Endothelial cell of umbilical vein (primary cell): ENCODE measurements at regions of chr21 and their contacts with region 1.

Region 1: DNA sequence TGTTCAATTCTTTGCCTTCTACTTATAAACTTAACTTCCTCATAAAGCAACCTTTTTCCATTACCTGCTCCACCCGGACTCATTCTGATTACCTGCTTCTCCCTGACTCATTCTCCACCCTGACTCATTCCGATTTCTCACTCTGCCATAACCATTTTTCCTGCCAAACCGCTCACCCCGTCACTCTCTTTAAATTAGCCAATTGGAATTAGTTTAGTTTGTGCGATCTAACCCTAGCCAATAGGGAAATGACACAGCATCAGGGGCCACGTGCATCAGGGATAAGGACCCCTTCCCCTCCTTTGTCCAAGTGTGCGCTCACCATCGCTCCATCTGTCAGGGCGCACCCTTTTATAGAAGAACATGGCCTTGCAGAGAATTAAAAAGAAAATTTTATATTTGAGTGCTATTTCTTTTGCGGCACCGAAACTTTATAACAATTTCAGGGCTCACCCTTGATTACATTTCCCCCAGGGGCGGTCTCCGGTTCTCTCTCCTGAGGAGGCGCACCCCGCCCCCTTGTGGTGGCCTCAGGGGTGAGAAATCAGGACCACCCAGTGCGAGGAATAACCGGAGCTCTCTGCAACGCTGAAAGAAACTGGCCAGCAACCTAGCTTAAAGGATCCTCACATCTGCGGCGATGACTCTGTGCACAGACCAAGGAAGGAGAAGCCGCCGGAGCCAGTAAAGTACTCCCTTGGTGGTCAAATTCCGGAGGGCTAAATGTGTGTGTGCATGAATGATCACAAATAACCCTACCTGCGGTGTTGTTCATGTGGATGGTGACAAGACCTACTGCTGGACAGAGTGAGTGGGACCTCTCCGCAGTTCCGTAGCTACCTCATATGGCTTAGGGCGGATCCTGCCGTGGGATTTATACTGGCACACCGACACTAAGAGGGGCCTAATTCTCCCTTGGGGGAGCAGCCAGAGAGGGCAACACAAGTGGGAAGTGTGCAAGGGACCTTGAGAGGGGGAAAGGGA is 30.3 kb upstream of the CBR3 start:
- DNase-seq: peak; percentile 36
- H3K4me3 ChIP-seq: no peak overlapping the region
- H3K27ac ChIP-seq: no peak overlapping the region
- H3K4me1 ChIP-seq: no peaks in the 10 kb centered on the region
- H3K27me3 ChIP-seq: peaks cover 38 to 48% of the 10 kb centered on the region in 2 experiments
- CTCF ChIP-seq: peak; percentile 55 to 68
- POLR2A ChIP-seq: no peak

Region 2: DNA sequence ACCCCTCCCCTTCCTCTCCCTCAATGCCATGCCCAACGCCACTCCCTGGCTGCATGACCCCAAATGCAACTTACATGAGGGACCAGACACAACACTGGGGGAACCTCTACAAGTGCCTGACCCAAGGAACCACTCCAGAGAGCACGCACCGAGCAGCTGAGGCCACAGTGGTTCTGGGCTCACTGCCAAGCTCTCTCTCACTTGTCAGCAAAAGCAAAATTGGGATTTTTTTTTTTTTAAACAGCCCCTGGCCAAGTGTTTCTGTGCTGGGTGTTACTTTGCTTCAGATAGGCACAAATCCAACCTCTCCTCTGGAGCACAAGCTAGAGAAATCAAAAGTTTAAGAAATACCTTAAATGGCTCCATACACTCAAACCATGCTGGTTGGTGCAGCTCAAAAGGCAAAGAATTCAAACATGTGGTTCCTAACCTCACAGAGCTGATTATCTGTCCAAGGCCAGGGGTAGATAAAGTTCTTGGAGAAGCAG is 407.2 kb before region 1 on chr21:
- CTCF ChIA-PET with region 1: no interaction called
- POLR2A ChIA-PET with region 1: no interaction called
- dilution Hi-C with region 1: no loop called
- intact Hi-C with region 1: no loop called
- DNase-seq: no peak
- H3K4me3 ChIP-seq: no peak overlapping the region
- H3K27ac ChIP-seq: no peak overlapping the region
- H3K4me1 ChIP-seq: no peaks in the 10 kb centered on the region
- H3K27me3 ChIP-seq: peaks cover 26 to 30% of the 10 kb centered on the region in 2 experiments
- CTCF ChIP-seq: no peak
- POLR2A ChIP-seq: no peak

Region 3: GRCh38 chr21:36060159-36060921 is 44.3 kb before region 1 on chr21 and contains the start of gene SETD4:
- CTCF ChIA-PET with region 1: interaction called, 12 read pairs
- POLR2A ChIA-PET with region 1: no interaction called
- dilution Hi-C with region 1: no loop called
- intact Hi-C with region 1: no loop called
- DNase-seq: peak; percentile 91
- H3K4me3 ChIP-seq: peak within 1 kb of the TSS; percentile 16 to 96 (median 66)
- H3K27ac ChIP-seq: peak within 1 kb of the TSS; percentile 72
- H3K4me1 ChIP-seq: peaks cover 4% of the 10 kb centered on the region
- H3K27me3 ChIP-seq: no peaks in the 10 kb centered on the region
- CTCF ChIP-seq: no peak
- POLR2A ChIP-seq: peak; percentile 91
- total RNA-seq, gene SETD4: 19.6 and 25.1 TPM in 2 replicates

Region 4: GRCh38 chr21:36069713-36070573 is 34.7 kb before region 1 on chr21 and contains the start of gene CBR1:
- CTCF ChIA-PET with region 1: interaction called, 10 read pairs
- POLR2A ChIA-PET with region 1: no interaction called
- dilution Hi-C with region 1: no loop called
- intact Hi-C with region 1: no loop called
- DNase-seq: peak; percentile 74
- H3K4me3 ChIP-seq: peak within 1 kb of the TSS; percentile 11 to 83 (median 54)
- H3K27ac ChIP-seq: peak within 1 kb of the TSS; percentile 66
- H3K4me1 ChIP-seq: peaks cover 15% of the 10 kb centered on the region
- H3K27me3 ChIP-seq: no peaks in the 10 kb centered on the region
- CTCF ChIP-seq: no peak
- POLR2A ChIP-seq: peak; percentile 79
- total RNA-seq, gene CBR1: 37.2 and 41.3 TPM in 2 replicates

Region 5: DNA sequence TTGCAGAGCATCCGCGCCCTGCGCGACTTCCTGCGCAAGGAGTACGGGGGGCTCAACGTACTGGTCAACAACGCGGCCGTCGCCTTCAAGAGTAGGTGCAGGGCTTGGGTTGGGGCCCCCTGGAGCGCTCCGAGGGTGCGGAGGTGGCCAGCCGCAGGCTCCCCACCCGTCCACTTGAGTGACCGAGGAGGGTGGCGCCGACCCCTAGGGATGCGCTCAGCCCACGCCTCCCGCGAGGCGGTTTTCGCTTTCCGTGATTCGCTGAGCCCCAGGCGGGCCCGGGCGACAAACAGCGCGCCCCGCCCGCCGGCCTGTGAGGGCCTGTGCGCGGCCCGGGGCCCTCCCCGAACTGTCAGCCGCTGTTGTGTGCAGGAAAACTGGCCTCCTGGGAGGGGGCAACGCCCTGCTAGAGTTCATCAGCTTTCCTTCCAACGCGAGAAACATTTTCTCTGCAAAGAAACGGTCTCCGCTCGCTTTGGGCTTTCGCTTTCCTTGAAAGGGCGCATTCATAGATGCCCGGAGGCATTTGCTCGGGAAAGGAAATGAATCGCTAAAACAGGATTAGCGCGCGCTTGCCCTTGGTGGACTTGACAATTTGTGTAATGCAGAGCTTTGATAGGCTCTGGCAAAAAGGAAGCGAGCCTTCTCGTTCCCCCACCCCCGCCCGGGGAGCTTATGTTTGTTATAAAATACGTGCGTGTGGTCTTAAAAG is 30.9 kb after region 1 on chr21:
- CTCF ChIA-PET with region 1: no interaction called
- POLR2A ChIA-PET with region 1: no interaction called
- dilution Hi-C with region 1: no loop called
- intact Hi-C with region 1: no loop called
- DNase-seq: peak; percentile 76
- H3K4me3 ChIP-seq: peak overlapping the region; percentile 32 to 87 (median 77)
- H3K27ac ChIP-seq: peak overlapping the region; percentile 27
- H3K4me1 ChIP-seq: peaks cover 14% of the 10 kb centered on the region
- H3K27me3 ChIP-seq: no peaks in the 10 kb centered on the region
- CTCF ChIP-seq: no peak
- POLR2A ChIP-seq: no peak

Region 6: GRCh38 chr21:36169436-36170128 is 65.0 kb after region 1 on chr21:
- CTCF ChIA-PET with region 1: no interaction called
- POLR2A ChIA-PET with region 1: no interaction called
- dilution Hi-C with region 1: no loop called
- intact Hi-C with region 1: no loop called
- DNase-seq: no peak
- H3K4me3 ChIP-seq: no peak overlapping the region
- H3K27ac ChIP-seq: no peak overlapping the region
- H3K4me1 ChIP-seq: no peaks in the 10 kb centered on the region
- H3K27me3 ChIP-seq: no peaks in the 10 kb centered on the region
- CTCF ChIP-seq: no peak
- POLR2A ChIP-seq: no peak